Right ventricle myocardium superior (tissue), 1 donor: ENCODE measurements at regions of chr15 and their contacts with region 1.

Region 1: GRCh38 chr15:83747050-83747717 is 93.3 kb downstream of the ADAMTSL3 start:
- DNase-seq: no peak
- ATAC-seq: peak; percentile 87

Region 2: DNA sequence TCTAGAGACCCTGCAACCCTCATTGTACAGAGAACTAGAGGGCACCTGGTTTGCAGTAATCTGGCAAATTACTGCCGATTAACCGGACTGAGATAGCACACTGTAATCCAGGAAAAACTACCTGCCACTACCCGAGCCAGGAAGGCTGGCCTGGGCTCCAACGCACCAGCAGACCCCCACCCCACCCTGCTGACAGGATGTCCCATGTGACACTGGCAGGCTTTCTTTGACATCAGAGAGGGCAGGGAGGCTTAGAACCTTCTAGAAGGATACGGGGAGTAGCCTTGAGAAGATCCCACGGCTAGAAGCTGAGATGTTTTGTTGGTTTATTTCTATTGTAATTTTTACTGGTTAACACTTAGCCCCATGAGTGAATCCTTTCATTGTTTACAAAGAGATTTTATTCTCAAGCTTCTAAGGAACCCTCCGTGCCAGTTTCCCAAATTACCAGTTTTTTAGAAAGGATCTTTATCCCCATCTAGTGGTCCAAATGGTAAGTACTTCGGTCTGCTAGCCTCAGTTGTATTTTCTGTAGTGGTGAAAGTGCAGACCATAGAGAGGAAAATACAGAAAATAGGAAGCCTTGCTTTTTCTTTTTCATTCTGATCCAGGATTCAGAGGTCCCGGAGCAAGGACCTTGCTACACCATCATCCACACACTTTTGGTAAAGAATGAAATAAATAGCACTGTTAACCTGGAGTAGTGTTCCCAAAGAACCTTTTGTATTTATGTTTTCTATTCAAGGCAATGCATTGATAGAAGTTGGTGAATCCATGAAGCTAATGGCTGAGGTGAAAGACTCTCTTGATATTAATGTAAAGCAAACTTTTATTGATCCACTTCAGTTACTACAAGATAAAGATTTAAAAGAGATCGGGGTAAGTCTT is 175.1 kb before region 1 on chr15:
- intact Hi-C with region 1: loop called (anchors 10 kb)
- DNase-seq: no peak
- ATAC-seq: peak; percentile 41

Region 3: DNA sequence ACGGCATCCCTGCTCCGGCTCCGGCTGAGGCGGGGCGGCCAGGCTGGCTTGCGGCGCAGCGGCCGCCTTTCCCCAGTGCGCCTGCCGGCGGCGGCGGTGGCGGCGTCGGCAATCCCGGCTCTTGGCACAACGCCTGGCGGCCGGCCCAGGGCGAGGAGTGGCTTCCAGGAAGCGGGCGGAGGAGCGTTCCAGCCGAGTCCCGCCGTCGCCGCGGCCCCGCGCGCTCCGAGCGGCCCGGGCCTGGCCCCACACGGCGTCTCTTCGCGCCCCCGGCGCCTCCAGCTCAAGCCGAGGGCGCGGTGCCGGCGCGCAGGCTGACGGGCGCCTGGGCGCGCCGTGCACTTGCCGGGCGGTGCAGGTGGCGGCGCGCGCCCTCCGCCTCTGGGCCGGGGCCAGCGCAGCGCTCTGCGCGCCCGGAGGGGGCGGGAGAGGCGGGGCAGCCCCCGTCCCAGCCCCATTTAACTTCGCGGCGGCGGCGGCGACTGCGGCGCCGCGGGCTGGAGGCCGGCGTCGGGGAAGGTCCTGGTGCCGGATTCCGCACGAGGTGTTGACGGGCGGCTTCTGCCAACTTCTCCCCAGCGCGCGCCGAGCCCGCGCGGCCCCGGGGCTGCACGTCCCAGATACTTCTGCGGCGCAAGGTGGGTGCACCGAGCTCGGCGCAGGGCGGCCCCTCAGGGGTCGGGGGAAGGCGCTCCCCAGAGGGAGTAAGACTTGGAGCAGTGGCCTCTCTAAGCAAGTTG is 93.4 kb before region 1 on chr15 and contains the start of gene ADAMTSL3:
- intact Hi-C with region 1: loop called (anchors 10 kb)
- DNase-seq: peak; percentile 92
- ATAC-seq: peak; percentile 68
- total RNA-seq, gene ADAMTSL3: 10.5 TPM